ENCODE measurements at regions of chr9 and their contacts with region 1.

Region 1: DNA sequence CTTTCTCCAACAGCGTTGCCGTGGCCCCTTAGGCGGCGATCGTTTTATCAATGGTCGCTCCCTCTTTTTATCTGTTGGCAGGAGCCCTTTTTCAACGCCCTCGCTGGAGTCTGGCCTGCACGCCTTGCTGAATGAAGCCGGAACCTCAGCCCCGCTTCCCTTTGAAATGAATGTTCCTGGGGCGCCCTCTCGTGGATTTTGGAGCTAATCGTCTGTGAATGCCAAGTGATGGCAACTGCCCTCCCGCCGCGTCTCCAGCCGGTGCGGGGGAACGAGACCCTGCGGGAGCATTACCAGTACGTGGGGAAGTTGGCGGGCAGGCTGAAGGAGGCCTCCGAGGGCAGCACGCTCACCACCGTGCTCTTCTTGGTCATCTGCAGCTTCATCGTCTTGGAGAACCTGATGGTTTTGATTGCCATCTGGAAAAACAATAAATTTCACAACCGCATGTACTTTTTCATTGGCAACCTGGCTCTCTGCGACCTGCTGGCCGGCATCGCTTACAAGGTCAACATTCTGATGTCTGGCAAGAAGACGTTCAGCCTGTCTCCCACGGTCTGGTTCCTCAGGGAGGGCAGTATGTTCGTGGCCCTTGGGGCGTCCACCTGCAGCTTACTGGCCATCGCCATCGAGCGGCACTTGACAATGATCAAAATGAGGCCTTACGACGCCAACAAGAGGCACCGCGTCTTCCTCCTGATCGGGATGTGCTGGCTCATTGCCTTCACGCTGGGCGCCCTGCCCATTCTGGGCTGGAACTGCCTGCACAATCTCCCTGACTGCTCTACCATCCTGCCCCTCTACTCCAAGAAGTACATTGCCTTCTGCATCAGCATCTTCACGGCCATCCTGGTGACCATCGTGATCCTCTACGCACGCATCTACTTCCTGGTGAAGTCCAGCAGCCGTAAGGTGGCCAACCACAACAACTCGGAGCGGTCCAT is 10.0 kb downstream of the S1PR3 start:
- DNase-seq: peak; percentile 84
- CTCF ChIP-seq: peak; percentile 59

Region 2: GRCh38 chr9:88593537-88594185 is 407.6 kb before region 1 on chr9:
- in situ Hi-C with region 1: loop called (anchors 10 kb)
- DNase-seq: peak; percentile 60
- CTCF ChIP-seq: peak; percentile 45

Region 3: GRCh38 chr9:89400403-89401116 is 399.3 kb after region 1 on chr9:
- in situ Hi-C with region 1: no loop called
- DNase-seq: peak; percentile 77
- CTCF ChIP-seq: no peak

Region 4: GRCh38 chr9:89743573-89744361 is 742.5 kb after region 1 on chr9:
- in situ Hi-C with region 1: no loop called
- DNase-seq: peak; percentile 76
- CTCF ChIP-seq: no peak